Head of caudate nucleus (tissue), 42 donors: ENCODE measurements at regions of chr17 and their contacts with region 1.

Region 1: DNA sequence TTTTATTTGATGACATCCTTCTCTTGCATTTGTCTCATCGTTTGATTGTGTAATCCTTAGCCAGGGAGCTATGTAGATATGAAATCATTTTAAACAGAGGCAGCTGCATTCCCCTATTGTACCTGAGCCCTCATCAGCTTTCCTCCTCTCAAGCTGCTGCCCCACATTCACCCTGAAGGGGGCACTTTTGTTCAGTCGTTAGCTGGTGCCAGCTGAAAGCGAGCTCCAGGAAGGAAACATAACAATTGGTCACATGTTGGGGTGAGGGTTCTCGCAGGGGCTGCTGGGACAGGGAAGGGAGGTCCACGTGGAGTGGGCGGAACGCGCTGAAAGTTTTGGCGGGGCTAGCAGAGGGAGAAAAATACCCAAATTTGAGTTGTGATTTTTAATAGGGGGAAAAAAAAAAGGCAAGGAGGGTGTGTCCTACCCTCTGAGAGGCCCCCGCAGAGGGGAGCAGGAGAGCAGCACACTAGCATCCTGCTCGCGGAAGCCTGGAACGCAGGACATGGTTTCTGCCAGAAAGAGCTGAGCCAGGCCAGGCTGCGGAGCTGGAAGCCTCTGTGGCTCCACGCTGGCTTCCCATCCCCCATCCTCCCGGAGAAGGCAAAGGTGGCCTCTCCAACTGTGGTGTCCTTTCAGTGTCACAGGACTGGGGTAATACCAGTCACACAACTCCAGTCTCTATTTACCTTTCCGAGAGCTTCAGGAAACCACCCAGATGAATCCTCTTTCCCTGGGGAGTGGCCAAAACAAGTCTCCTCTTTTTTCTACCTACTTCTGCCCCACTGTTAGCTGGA is 8.5 kb upstream of the MSL1 start:
- DNase-seq: peak; percentile 85 to 99 (median 96)

Region 2: GRCh38 chr17:39813631-39814030 is 299.7 kb before region 1 on chr17:
- intact Hi-C with region 1: no loop called
- DNase-seq: no peak

Region 3: GRCh38 chr17:40069751-40070708 is 43.3 kb before region 1 on chr17:
- intact Hi-C with region 1: loop called (anchors 5 kb)
- DNase-seq: peak in 39 of 42 donors; percentile 44 to 93 (median 74)

Region 4: DNA sequence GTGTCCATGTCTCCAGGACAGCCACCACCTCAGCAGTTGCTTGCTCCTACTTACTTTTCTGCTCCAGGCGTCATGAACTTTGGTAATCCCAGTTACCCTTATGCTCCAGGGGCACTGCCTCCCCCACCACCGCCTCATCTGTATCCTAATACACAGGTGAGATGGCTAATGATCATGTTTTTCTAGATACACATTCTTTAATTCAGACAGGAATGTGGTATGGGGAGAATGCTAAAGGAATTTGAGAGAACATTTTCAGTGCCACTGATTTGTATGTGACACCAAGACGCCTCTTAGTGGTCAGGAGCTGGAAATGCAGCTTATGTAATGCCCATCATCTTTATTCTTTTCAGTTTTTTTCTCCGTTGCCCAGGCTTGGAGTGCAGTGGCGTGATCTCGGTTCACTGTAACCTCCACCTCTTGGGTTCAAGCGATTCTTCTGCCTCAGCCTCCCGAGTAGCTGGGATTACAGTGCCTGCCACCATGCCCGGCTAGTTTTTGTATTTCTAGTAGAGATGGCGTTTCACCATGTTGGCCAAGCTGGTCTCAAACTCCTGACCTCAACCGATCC is 55.0 kb after region 1 on chr17:
- intact Hi-C with region 1: loop called (anchors 2 kb)
- DNase-seq: peak in 25 of 42 donors; percentile 30 to 81 (median 50)

Region 5: DNA sequence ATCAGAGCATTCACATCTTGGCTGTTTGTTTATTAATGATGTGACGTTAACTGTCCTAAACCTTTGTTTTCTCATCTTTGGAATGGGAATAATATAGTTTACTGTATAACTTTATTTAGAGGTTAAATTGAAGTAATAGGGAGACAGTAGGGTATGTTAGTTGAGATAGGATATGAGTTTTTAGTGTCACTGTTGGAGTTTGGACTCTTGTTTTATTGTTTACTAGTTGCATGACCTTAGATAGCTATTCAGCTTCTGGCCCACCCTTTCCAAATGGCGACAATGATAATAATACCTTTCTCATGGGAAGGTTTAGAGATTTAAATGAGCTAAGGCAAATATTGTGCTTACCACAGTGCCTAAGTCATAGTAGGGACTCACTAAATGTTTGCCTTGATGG is 146.2 kb after region 1 on chr17:
- intact Hi-C with region 1: no loop called
- DNase-seq: no peak